ENCODE measurements at regions of chr10 and their contacts with region 1.

Region 1: GRCh38 chr10:45235798-45236231 is 79.6 kb downstream of the OR13A1 start:
- DNase-seq: no peak
- ATAC-seq: no peak
- H3K4me3 ChIP-seq: no peak overlapping the region
- H3K27ac ChIP-seq: no peak overlapping the region
- H3K4me1 ChIP-seq: no peaks in the 10 kb centered on the region
- H3K27me3 ChIP-seq: no peaks in the 10 kb centered on the region

Region 2: GRCh38 chr10:45008524-45009161 is 227.2 kb before region 1 on chr10:
- intact Hi-C with region 1: loop called (anchors 5 to 10 kb)
- DNase-seq: no peak
- ATAC-seq: peak; percentile 93
- H3K4me3 ChIP-seq: no peak overlapping the region
- H3K27ac ChIP-seq: no peak overlapping the region
- H3K4me1 ChIP-seq: no peaks in the 10 kb centered on the region
- H3K27me3 ChIP-seq: no peaks in the 10 kb centered on the region

Measured in aorta (tissue), 5 donors.